ENCODE measurements at regions of chr3 and their contacts with region 1.

Region 1: DNA sequence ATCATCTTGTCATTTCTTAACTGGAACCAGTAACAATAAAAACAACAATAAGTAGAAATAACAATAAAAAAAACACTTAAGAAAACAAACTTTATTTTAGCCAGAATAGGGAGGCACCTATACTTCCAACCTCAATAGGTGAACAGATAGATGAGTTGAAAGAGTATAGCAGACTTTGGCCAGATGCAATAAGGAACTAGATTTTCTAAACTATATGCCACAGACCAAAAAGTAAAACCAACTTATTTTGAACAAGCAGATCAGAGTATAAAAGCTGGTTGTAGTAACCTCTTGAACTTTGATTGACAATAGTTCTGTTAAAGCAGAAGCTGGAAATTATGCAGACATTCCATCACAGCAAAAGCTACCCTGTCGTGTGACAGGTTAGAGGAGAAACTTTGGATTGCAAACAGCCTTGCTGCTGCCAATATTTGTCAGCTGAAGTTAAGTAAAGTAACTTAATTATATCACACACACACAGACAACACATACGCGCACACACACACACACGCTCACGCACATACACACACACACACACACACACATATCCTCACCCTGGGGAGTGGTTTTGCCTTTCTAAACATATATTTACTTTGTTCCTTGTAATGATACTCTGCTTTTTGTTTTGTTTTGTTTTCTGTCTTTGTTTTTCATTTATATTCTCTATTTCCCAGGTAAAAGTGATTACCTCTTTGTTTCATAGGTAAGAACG is 903.6 kb downstream of the VGLL3 start:
- DNase-seq: no peak
- ATAC-seq: no peak

Region 2: DNA sequence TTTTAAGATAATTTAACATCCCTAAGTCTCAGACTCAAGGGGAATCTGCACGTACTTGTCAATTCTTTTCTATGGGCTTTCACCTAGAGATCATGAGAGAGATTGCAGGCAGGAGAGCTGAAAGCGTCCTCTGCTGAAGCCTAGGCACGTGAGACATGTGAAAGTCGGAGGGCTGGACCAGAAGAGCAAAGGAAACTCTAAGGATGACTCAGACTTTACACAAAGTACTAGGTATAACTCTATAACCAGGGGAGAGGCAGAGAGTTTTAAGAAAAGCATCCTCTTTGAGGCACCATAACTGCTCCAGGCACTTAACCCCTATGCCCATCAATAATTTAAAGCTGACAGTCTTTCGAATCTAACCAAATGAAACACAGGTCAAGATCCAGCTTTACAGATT is 467.1 kb after region 1 on chr3:
- intact Hi-C with region 1: loop called (anchors 10 kb)
- DNase-seq: no peak
- ATAC-seq: no peak